Activated CD4-positive, alpha-beta T cell treated with anti-CD3 and anti-CD28 coated beads, Interleukin-2, amount 10 ng/mL, durations not matched to agents 7 days and 5 days (primary cell): ENCODE measurements at regions of chr2 and their contacts with region 1.

Region 1: DNA sequence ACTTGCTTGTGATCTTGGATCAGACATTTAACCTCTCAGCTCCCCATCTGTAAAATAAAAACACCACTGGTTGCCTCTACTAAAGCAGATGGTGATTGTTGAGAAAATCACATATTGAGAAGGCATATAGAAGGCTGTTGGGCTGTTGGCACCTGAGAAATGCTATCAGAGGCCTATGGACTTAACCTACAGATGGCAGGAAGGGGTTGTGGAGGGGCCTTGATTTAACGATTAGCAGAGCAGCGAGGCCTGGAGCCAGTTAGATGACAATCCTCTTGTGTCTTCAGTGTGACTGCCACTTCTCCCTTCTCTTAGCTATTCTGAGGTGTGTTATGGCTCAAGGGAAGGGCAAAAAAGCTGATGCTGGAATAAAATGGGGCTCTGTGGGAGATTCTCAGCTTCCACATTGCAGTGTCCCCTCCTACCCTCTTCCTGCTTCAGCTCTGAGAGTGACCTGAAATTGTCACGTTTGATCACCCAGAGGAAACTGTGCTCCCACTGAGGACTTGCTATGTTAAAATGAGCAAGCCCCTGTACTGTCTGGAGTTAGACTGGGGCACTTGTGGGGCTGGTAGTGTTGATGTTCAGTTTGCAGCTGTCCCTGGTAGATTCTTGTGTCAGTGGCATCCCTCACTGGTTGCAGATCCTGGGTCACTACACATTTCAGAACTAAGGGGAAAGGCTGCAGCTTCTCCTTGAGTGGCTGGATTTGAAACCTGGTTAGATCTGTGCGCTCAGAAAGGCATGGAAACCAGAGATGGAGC is 31.5 kb downstream of the CXCR4 start:
- DNase-seq: no peak
- H3K4me3 Mint-ChIP-seq: no peak overlapping the region
- H3K27ac Mint-ChIP-seq: no peak overlapping the region
- H3K4me1 Mint-ChIP-seq: peaks cover 9% of the 10 kb centered on the region
- H3K27me3 Mint-ChIP-seq: no peaks in the 10 kb centered on the region

Region 2: GRCh38 chr2:136068581-136069227 is 17.7 kb before region 1 on chr2:
- CTCF ChIA-PET with region 1: interaction called, 17 read pairs
- POLR2A ChIA-PET with region 1: no interaction called
- DNase-seq: peak; percentile 25
- H3K4me3 Mint-ChIP-seq: no peak overlapping the region
- H3K27ac Mint-ChIP-seq: peak overlapping the region; percentile 75
- H3K4me1 Mint-ChIP-seq: peaks cover 54% of the 10 kb centered on the region
- H3K27me3 Mint-ChIP-seq: no peaks in the 10 kb centered on the region

Region 3: GRCh38 chr2:136130511-136130910 is 44.1 kb after region 1 on chr2:
- CTCF ChIA-PET with region 1: no interaction called
- POLR2A ChIA-PET with region 1: no interaction called
- DNase-seq: no peak
- H3K4me3 Mint-ChIP-seq: no peak overlapping the region
- H3K27ac Mint-ChIP-seq: peak overlapping the region; percentile 97
- H3K4me1 Mint-ChIP-seq: peaks cover 88% of the 10 kb centered on the region
- H3K27me3 Mint-ChIP-seq: peaks cover 13% of the 10 kb centered on the region